Prostate gland (tissue), 2 donors: ENCODE measurements at regions of chrX and their contacts with region 1.

Region 1: DNA sequence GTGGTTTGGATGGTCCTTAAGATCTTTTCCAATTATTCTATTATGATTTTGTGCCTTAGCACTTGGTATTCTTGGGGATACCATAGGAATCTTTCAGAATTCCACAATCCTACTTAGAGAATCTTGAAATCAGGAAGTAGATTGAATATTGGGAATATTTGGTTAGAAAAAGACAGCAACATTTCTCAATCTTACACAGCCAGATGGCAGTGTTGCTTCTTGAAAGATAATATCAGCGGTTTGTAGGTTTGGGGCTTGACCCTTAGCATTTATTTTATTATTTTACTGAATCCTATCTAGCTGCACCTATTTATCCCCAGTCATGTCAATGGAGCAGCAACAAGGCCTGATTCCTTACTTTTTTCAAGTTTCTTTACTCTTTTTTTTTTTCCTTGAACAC is 28.6 kb downstream of the MAGEB1 start:
- DNase-seq: no peak
- H3K4me3 ChIP-seq: no peak overlapping the region
- H3K27ac ChIP-seq: no peak overlapping the region
- H3K4me1 ChIP-seq: no peaks in the 10 kb centered on the region
- H3K27me3 ChIP-seq: no peaks in the 10 kb centered on the region
- CTCF ChIP-seq: peak in 1 of 4 experiments; percentile 32
- POLR2A ChIP-seq: no peak

Region 2: DNA sequence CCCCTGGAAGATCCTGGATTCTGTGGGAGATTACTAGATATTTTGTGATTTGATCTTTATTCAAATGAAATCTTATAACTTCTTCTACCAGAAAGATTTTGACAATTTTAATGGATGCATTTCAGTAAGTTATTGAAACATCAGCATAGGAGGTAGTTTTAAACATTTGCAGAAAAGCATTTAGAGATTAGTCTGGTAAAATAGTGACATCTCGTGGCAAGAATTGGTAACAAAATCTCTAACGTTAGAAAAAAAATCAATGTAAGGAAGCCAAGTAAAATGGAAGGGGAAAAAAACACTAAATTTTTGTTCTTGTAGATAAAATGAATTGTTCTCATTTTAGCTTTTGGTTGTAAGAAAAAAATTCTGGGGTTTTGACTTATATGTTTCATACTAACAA is 228.8 kb after region 1 on chrX:
- intact Hi-C with region 1: loop called (anchors 10 kb)
- DNase-seq: no peak
- H3K4me3 ChIP-seq: no peak overlapping the region
- H3K27ac ChIP-seq: no peak overlapping the region
- H3K4me1 ChIP-seq: no peaks in the 10 kb centered on the region
- H3K27me3 ChIP-seq: no peaks in the 10 kb centered on the region
- CTCF ChIP-seq: peak in 3 of 4 experiments; percentile 21 to 51 (median 39)
- POLR2A ChIP-seq: no peak